ENCODE measurements at regions of chr10 and their contacts with region 1.

Region 1: DNA sequence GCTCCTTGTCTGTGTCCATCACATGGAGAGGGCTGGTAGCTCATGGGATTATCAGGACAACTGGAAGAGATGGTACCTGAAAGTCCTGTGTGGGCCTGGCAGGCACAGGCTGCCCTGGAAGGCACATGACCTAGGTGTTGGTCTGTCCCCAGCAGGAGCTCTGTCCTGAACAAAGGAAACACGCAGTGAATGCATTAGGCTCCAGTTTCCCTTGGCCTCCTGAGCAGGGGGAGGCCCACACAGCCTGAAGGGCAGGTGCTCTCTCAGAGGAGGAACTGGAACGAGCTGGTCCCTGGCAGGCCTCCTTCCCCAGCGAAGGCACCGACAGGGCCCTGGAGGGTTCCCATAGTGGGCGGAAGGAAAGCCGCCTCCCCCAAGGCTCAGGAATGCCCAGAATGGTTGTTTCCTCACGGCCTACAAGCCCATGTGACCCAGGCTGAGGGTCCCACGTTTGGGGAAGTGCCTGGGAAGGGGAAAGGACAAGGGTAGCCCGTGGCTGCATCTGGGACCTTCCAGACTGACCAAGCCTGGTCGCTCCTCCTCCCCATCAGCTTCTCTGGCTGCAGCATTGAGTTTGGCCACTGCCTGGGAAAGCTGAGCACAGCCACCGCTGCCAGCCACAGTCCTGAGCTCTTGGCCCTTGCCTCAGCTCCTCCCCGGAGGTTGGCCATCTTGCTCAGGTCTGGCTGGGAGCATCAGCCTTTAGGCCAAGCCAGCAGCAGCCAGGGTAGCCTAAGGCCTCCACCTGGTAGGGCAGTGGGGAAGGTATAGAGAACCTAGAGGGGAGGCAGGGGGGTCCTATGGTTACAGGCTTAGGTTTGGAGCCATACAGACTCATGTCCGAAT is 21.8 kb downstream of the CXCL12 start:
- DNase-seq: no peak
- ATAC-seq: no peak
- H3K4me3 ChIP-seq: no peak overlapping the region
- H3K27ac ChIP-seq: no peak overlapping the region
- H3K4me1 ChIP-seq: no peaks in the 10 kb centered on the region
- H3K27me3 ChIP-seq: peaks cover 10% of the 10 kb centered on the region
- CTCF ChIP-seq: no peak

Region 2: GRCh38 chr10:42690449-42691360 is 1672.4 kb before region 1 on chr10:
- CTCF ChIA-PET with region 1: no interaction called
- POLR2A ChIA-PET with region 1: interaction called, 15 read pairs
- in situ Hi-C with region 1: no loop called
- intact Hi-C with region 1: no loop called
- DNase-seq: no peak
- ATAC-seq: peak; percentile 89
- H3K4me3 ChIP-seq: peak overlapping the region in 1 of 2 experiments; percentile 38; a peak in 1 of 4 replicates
- H3K27ac ChIP-seq: no peak overlapping the region
- H3K4me1 ChIP-seq: no peaks in the 10 kb centered on the region
- H3K27me3 ChIP-seq: no peaks in the 10 kb centered on the region; the same call in 1 of the 2 replicates
- CTCF ChIP-seq: peak; percentile 57

Region 3: DNA sequence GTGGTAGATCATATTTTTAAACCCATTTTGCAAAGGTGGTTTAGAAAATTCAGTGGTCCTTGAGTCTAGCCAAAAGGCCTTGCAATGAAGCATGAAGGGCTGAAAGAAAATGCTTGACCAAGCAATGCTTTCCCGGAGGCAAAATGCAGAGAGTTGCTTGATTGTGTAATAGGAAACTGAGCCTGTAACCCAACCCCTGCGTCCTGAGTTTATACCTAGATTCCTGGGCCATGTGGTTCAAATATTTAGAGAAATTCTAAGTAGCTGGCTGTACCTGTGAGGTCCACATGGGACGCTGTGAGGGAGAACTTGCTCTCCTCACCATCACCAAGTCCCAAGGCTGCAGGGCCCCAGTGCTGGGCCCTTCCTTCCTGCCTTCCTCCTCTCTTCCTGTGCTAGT is 23.9 kb before region 1 on chr10:
- CTCF ChIA-PET with region 1: no interaction called
- POLR2A ChIA-PET with region 1: no interaction called
- in situ Hi-C with region 1: no loop called
- intact Hi-C with region 1: no loop called
- DNase-seq: no peak
- ATAC-seq: no peak
- H3K4me3 ChIP-seq: no peak overlapping the region
- H3K27ac ChIP-seq: no peak overlapping the region
- H3K4me1 ChIP-seq: no peaks in the 10 kb centered on the region
- H3K27me3 ChIP-seq: peaks cover 2% of the 10 kb centered on the region; the same call in 1 of the 2 replicates
- CTCF ChIP-seq: no peak

Region 4: DNA sequence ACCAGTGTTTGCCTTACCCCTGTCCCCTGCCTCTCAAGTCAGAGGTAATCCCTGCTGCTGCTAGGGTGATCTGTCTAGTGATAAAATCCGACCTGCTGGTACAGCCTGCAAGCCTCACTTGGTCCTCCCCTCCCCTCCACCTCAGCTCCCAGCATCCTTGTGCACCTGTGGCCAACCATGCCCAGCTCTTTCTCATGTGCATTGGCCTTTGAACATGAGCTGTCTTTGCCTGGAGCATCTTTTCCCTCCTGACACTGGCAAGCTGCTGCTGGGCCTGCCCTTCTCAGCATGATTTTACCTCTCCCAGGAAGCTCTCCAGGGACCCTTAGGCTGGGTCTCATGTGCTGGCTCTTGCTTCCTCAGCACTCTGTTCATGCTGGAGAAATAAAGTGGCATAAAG is 73.2 kb after region 1 on chr10:
- CTCF ChIA-PET with region 1: interaction called, 14 read pairs
- POLR2A ChIA-PET with region 1: no interaction called
- in situ Hi-C with region 1: no loop called
- intact Hi-C with region 1: no loop called
- DNase-seq: no peak
- ATAC-seq: no peak
- H3K4me3 ChIP-seq: no peak overlapping the region
- H3K27ac ChIP-seq: no peak overlapping the region
- H3K4me1 ChIP-seq: no peaks in the 10 kb centered on the region
- H3K27me3 ChIP-seq: no peaks in the 10 kb centered on the region
- CTCF ChIP-seq: no peak

Measured in Panc1 (cell line).